ENCODE measurements at regions of chr2 and their contacts with region 1.

Region 1: GRCh38 chr2:201680743-201681142 is 17.7 kb downstream of the MPP4 start:
- DNase-seq: peak; percentile 25 to 85
- H3K4me3 ChIP-seq: no peak overlapping the region
- H3K27ac ChIP-seq: no peak overlapping the region
- H3K4me1 ChIP-seq: peaks cover 0 to 3% (median under 1%) of the 10 kb centered on the region in 4 experiments; a peak in 2 of 7 replicates
- H3K27me3 ChIP-seq: no peaks in the 10 kb centered on the region
- CTCF ChIP-seq: peak; percentile 91 to 99 (median 97)
- EP300 ChIP-seq: no peak
- POLR2A ChIP-seq: no peak
- RAD21 ChIP-seq: peak; percentile 63 to 72

Region 2: DNA sequence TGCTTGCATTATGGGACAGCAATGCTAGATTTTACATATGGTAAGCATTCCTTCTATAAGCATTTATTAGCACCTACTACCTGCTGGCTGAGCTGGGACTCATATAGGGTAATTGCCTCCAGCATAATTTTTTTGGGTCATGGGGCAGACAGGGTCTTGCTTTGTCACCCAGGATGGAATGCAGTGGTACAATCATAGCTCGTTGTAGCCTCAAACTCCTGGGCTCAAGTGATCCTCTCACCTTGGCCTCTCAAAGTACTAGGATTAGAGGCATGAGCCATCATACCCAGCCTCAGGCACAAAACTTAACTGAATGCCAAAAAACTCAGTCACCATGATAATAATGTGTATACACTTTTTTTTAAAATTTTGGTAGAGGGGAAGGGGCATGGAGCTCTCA is 72.7 kb before region 1 on chr2:
- CTCF ChIA-PET with region 1: no interaction called
- POLR2A ChIA-PET with region 1: no interaction called
- DNase-seq: no peak
- H3K4me3 ChIP-seq: no peak overlapping the region
- H3K27ac ChIP-seq: no peak overlapping the region
- H3K4me1 ChIP-seq: no peaks in the 10 kb centered on the region
- H3K27me3 ChIP-seq: no peaks in the 10 kb centered on the region
- CTCF ChIP-seq: no peak
- EP300 ChIP-seq: no peak
- POLR2A ChIP-seq: no peak
- RAD21 ChIP-seq: no peak

Region 3: DNA sequence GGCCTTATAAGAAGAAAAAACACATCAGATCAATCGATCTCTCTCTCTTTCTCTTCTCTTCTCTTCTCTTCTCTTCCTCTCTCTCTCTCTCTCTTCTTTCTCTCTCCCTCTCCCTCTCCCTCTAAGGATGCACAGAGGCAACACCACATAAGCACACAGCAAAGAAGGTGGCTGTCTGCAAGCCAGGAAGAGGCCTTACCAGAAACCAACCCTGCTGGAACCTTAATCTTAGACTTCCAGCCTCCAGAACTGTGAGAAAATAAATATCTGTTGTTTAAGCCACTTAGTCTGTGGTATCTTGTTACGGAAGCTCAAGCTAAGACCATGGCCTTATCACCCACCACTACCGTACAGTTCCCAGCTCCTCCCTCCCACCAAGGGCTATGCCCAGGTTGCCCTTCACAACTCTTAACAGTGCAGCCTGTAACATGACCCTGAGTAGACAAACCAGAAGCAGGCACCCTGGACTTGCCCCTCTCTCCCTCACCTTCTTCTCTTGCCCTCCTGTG is 12.3 kb before region 1 on chr2:
- CTCF ChIA-PET with region 1: interaction called, 37 read pairs
- POLR2A ChIA-PET with region 1: interaction called, 3 read pairs
- DNase-seq: no peak
- H3K4me3 ChIP-seq: no peak overlapping the region
- H3K27ac ChIP-seq: no peak overlapping the region
- H3K4me1 ChIP-seq: no peaks in the 10 kb centered on the region
- H3K27me3 ChIP-seq: no peaks in the 10 kb centered on the region
- CTCF ChIP-seq: no peak
- EP300 ChIP-seq: no peak
- POLR2A ChIP-seq: no peak
- RAD21 ChIP-seq: no peak

Region 4: DNA sequence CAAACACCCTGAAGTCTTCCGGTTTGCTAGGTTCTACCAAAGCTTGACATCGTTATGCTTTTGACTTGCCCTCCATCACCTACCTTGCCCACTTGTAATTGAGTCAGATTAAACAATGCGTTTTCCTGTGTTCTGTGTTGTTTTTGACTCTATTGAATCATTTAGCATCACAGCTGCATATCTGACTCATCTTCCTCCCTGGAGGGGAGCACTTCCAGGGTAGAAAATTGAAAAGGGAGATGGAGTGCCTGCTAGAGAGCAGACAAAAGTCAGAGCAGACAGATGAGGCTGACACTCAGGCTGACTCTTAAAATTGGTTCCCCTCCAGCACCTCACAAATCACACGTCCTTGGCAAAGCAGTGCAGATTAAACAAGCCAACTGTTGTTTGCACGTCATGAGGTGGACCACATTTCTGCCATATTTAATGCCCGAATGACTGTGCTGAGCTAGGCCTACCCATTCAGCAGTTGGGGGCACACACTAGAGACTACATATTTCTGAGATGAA is 15.5 kb after region 1 on chr2:
- CTCF ChIA-PET with region 1: interaction called, 34 read pairs
- POLR2A ChIA-PET with region 1: interaction called, 4 read pairs
- DNase-seq: no peak
- H3K4me3 ChIP-seq: no peak overlapping the region
- H3K27ac ChIP-seq: no peak overlapping the region
- H3K4me1 ChIP-seq: peaks cover 0 to 20% (median 8%) of the 10 kb centered on the region in 4 experiments
- H3K27me3 ChIP-seq: no peaks in the 10 kb centered on the region
- CTCF ChIP-seq: no peak
- EP300 ChIP-seq: no peak
- POLR2A ChIP-seq: no peak
- RAD21 ChIP-seq: no peak